ENCODE measurements at regions of chr3 and their contacts with region 1.

Region 1: DNA sequence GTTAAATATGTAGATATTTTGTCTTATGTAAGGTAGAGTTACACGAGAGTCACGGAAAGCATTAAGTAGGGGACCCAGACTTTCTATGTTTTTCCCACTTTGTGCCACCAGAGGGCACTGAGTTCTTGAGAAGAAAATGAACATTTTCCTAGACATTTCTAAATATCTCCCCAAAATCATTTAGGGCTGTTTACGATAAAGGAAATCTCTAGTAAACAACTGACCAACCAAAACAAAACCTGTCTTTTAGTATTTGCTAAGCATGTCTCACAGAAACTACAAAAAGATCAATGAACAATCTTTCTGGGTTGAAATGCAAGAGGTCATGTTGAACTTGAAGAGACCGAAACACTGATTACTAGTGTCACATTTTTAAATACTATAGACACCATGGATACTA is 16.1 kb downstream of the POU1F1 start:
- DNase-seq: peak; percentile 18 to 45 (median 33)
- H3K4me3 ChIP-seq: no peak overlapping the region
- H3K4me3 Mint-ChIP-seq: no peak overlapping the region
- H3K27ac ChIP-seq: no peak overlapping the region
- H3K27ac Mint-ChIP-seq: no peak overlapping the region
- H3K4me1 ChIP-seq: no peaks in the 10 kb centered on the region
- H3K4me1 Mint-ChIP-seq: no peaks in the 10 kb centered on the region
- H3K27me3 ChIP-seq: no peaks in the 10 kb centered on the region
- H3K27me3 Mint-ChIP-seq: no peaks in the 10 kb centered on the region

Region 2: DNA sequence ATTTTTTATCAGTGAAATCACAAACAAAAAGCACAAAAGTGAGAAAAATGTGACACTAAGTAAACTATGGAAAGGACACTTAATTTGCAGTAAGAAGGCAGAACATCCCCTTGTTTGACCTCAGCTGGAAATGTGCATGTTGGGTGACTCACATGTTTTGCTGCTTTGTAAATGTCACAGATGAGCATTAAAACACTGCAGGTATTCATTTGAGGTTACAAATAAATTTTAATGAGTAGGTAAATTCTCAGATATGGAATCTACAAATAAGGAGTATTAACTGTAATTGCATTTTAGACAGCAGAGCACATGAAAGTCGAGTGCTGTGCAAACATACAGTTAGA is 12.9 kb before region 1 on chr3:
- CTCF ChIA-PET with region 1: interaction called, 34 read pairs
- POLR2A ChIA-PET with region 1: no interaction called
- intact Hi-C with region 1: no loop called
- DNase-seq: no peak
- H3K4me3 ChIP-seq: no peak overlapping the region
- H3K4me3 Mint-ChIP-seq: no peak overlapping the region
- H3K27ac ChIP-seq: no peak overlapping the region
- H3K27ac Mint-ChIP-seq: no peak overlapping the region
- H3K4me1 ChIP-seq: no peaks in the 10 kb centered on the region
- H3K4me1 Mint-ChIP-seq: peaks cover 6 to 17% (median 11%) of the 10 kb centered on the region in 4 donors
- H3K27me3 ChIP-seq: no peaks in the 10 kb centered on the region
- H3K27me3 Mint-ChIP-seq: no peaks in the 10 kb centered on the region

Region 3: GRCh38 chr3:87272718-87273341 is 12.6 kb after region 1 on chr3:
- CTCF ChIA-PET with region 1: interaction called, 27 read pairs
- POLR2A ChIA-PET with region 1: no interaction called
- intact Hi-C with region 1: no loop called
- DNase-seq: no peak
- H3K4me3 ChIP-seq: no peak overlapping the region
- H3K4me3 Mint-ChIP-seq: no peak overlapping the region
- H3K27ac ChIP-seq: no peak overlapping the region
- H3K27ac Mint-ChIP-seq: no peak overlapping the region
- H3K4me1 ChIP-seq: peaks cover 8% of the 10 kb centered on the region
- H3K4me1 Mint-ChIP-seq: peaks cover 8 to 24% (median 11%) of the 10 kb centered on the region in 4 donors
- H3K27me3 ChIP-seq: no peaks in the 10 kb centered on the region
- H3K27me3 Mint-ChIP-seq: peaks cover 1 to 2% of the 10 kb centered on the region in 2 donors

Measured in CD4-positive, alpha-beta memory T cell (primary cell).